CD8-positive, alpha-beta T cell (primary cell): ENCODE measurements at regions of chr17 and their contacts with region 1.

Region 1: GRCh38 chr17:71613996-71614395 is 506.8 kb upstream of the SOX9 start:
- DNase-seq: no peak
- ATAC-seq: no peak
- H3K4me3 ChIP-seq: no peak overlapping the region
- H3K4me3 Mint-ChIP-seq: no peak overlapping the region
- H3K27ac ChIP-seq: no peak overlapping the region
- H3K27ac Mint-ChIP-seq: no peak overlapping the region
- H3K4me1 ChIP-seq: no peaks in the 10 kb centered on the region
- H3K4me1 Mint-ChIP-seq: no peaks in the 10 kb centered on the region
- H3K27me3 ChIP-seq: no peaks in the 10 kb centered on the region
- H3K27me3 Mint-ChIP-seq: no peaks in the 10 kb centered on the region
- CTCF ChIP-seq: no peak

Region 2: DNA sequence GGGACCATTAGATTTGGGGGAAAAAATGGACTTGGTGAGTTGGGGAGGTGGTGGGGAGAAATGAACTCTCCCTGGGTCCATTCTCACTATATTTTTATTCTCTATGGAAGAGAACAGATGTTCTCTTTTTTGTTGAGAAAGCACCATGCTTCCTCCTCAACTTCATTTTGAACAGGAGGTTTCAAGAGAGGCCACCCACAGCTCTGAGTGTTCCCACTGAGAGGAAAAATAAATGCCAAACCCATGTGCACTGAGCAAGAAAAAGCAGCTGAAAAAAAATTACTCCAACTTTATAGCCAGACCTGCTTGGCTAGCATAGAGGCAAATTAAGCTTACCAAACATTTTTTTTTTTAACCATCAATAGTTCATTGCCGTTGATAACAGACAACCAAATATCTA is 561.0 kb before region 1 on chr17:
- CTCF ChIA-PET with region 1: no interaction called
- POLR2A ChIA-PET with region 1: no interaction called
- intact Hi-C with region 1: loop called in 1 of 2 experiments (anchors 10 kb)
- DNase-seq: no peak
- ATAC-seq: no peak
- H3K4me3 ChIP-seq: no peak overlapping the region
- H3K4me3 Mint-ChIP-seq: no peak overlapping the region
- H3K27ac ChIP-seq: no peak overlapping the region
- H3K27ac Mint-ChIP-seq: no peak overlapping the region
- H3K4me1 ChIP-seq: no peaks in the 10 kb centered on the region
- H3K4me1 Mint-ChIP-seq: no peaks in the 10 kb centered on the region
- H3K27me3 ChIP-seq: no peaks in the 10 kb centered on the region
- H3K27me3 Mint-ChIP-seq: no peaks in the 10 kb centered on the region
- CTCF ChIP-seq: no peak